PC-9 (cell line): ENCODE measurements at regions of chr6 and their contacts with region 1.

Region 1: DNA sequence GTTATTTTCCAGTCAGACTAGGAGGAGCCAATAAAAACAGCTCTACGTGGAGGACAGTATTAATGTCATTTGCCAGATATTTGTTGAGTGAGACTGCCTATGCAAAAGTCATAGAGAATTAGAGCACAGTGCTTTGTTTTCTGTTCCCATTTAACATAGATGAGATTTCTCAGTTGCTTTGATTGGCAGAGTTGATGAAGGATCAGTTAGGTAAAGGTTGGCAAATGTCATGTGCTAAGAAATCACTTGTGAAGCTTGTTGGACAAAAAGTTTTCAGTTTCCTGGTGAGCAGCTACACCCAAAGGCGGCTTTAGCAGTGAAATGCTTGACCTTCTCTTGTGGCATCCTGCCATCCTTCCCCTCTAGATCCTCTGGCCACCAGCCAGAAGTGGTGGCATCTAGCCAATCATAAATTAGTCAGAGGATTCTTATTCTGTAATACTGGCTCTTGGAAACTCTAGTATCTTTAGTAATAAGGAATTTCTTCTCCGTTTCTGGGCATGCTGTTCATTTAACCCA is 37.0 kb downstream of the BCKDHB start:
- DNase-seq: peak; percentile 82 to 88
- H3K4me3 ChIP-seq: no peak overlapping the region
- H3K27ac ChIP-seq: peak overlapping the region; percentile 47
- H3K4me1 ChIP-seq: peaks cover 19% of the 10 kb centered on the region
- H3K27me3 ChIP-seq: no peaks in the 10 kb centered on the region
- CTCF ChIP-seq: no peak

Region 2: GRCh38 chr6:80106418-80107235 is 36.9 kb before region 1 on chr6 and contains the start of gene BCKDHB:
- CTCF ChIA-PET with region 1: no interaction called
- POLR2A ChIA-PET with region 1: no interaction called
- intact Hi-C with region 1: loop called (anchors 1 kb)
- DNase-seq: peak; percentile 91 to 98
- H3K4me3 ChIP-seq: peak within 1 kb of the TSS; percentile 73
- H3K27ac ChIP-seq: peak within 1 kb of the TSS; percentile 63
- H3K4me1 ChIP-seq: peaks cover 21% of the 10 kb centered on the region
- H3K27me3 ChIP-seq: no peaks in the 10 kb centered on the region
- CTCF ChIP-seq: no peak
- total RNA-seq, gene BCKDHB: 29.7 and 41.5 TPM in 2 replicates

Region 3: DNA sequence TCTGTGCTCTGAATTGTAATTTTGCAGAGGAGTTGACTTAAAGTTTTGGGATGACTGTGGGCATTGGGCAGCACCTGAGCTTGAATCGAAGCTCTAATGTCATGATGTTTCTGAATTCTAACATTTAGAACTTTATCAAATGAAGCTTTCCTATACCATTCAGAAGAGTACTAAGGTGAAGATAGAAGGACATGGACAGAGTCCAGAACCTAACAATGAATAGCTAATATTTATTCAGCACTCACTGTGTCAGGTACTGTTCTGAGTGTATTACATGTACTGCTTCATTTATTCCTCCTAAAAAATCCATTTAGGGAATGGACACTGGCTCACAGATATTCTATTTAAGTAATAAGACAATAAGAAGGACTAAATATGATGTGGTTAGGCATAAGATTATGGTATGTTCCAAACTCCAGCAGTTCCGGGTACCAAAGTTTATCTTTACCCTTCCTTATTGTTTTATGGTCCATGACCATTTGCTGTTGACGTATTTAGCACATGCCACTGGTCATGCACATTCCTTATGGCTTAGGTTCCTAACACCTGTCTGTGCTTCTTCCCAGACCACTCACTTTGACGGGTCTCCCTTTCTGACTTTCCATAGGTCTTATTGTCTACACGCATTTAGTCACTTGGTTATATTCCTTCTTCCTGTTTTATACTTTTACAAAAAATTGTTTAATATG is 16.7 kb before region 1 on chr6:
- CTCF ChIA-PET with region 1: no interaction called
- POLR2A ChIA-PET with region 1: no interaction called
- intact Hi-C with region 1: loop called (anchors 2 kb)
- DNase-seq: no peak
- H3K4me3 ChIP-seq: no peak overlapping the region
- H3K27ac ChIP-seq: no peak overlapping the region
- H3K4me1 ChIP-seq: peaks cover 32% of the 10 kb centered on the region
- H3K27me3 ChIP-seq: no peaks in the 10 kb centered on the region
- CTCF ChIP-seq: no peak

Region 4: DNA sequence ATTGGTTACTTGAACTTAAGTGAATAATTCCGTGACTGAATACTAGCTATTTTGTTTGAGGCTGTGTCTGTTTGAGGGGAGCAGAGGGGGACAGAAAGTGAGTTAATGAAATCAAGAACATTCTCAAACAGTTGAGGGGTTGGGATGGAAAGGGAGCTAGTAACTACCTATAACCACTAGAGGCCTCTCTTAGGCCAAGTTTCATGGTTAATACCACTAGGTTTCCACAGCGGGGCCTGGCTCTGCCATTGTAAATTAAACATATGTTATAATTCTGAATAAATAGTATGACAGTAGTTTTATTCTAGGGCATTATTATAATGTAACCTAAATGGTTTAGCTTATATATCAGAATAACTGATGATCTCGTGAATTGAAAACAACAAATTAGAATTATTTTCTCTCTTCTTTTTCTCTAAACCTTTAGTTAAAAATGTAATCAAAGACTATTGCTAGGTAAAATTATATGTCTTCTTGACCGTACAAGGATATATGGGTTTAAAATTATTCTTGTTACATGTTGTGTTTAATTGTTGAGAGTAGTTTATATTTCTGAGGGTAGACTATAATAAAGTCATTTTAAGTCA is 71.1 kb after region 1 on chr6:
- CTCF ChIA-PET with region 1: no interaction called
- POLR2A ChIA-PET with region 1: no interaction called
- intact Hi-C with region 1: loop called (anchors 5 kb)
- DNase-seq: peak in 1 of 2 experiments; percentile 7
- H3K4me3 ChIP-seq: no peak overlapping the region
- H3K27ac ChIP-seq: no peak overlapping the region
- H3K4me1 ChIP-seq: 0 out of 2 replicates have a peak, but pooled peaks cover 7% of the 10 kb centered on the region
- H3K27me3 ChIP-seq: no peaks in the 10 kb centered on the region
- CTCF ChIP-seq: peak; percentile 73